Caco-2 (cell line): ENCODE measurements at regions of chr2 and their contacts with region 1.

Region 1: GRCh38 chr2:219560037-219560892 is 11.1 kb downstream of the OBSL1 start:
- DNase-seq: peak in 1 of 2 experiments; percentile 33
- H3K4me3 ChIP-seq: no peak overlapping the region
- H3K4me3 Mint-ChIP-seq: no peak overlapping the region
- H3K27ac Mint-ChIP-seq: peak overlapping the region; percentile 64
- H3K4me1 ChIP-seq: peaks cover 25% of the 10 kb centered on the region
- H3K4me1 Mint-ChIP-seq: peaks cover 15% of the 10 kb centered on the region
- H3K27me3 ChIP-seq: no peaks in the 10 kb centered on the region; the same call in 1 of the 2 replicates
- H3K27me3 Mint-ChIP-seq: no peaks in the 10 kb centered on the region
- CTCF ChIP-seq: peak; percentile 75 to 91

Region 2: DNA sequence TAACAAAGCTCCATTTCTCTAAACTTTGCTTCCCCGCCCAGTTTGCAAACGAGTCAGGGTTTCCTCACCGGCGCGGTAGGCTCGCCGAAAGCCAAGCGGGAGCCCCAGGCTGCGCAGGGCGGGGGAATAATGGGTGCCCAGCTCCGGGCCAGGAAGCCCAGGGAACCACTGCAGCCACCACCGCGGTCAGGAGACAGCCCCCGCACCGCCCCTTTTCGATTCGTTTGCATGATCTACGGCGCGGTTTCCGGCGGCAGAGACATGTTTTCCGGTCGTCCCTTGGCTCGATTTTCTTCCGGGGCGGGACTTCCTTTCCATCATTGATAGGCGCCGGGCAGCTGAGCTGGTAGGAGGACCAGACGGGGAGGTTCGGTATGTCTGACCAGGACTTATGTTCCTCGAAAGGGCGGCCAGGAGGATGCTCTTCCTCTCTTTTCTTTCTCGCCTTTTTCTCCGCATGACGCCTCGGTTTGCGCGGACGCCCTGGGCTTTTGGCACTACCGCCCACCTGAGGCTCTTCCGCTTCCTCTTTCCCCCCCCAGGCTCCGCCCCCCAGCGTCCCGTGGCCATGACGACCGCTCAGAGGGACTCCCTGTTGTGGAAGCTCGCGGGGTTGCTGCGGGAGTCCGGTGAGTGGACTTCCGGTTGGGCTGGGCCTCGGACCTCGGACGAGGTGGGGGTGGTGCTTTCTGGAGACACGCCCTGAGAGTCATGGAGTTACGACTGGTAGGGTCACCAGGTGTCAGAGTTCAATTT is 37.5 kb after region 1 on chr2 and contains the start of gene STK11IP:
- CTCF ChIA-PET with region 1: interaction called, 5 read pairs
- POLR2A ChIA-PET with region 1: interaction called, 13 read pairs
- intact Hi-C with region 1: loop called (anchors 5 kb)
- DNase-seq: peak; percentile 97 to 99
- H3K4me3 ChIP-seq: peak within 1 kb of the TSS; percentile 72
- H3K4me3 Mint-ChIP-seq: peak within 1 kb of the TSS; percentile 96
- H3K27ac Mint-ChIP-seq: peak within 1 kb of the TSS; percentile 98
- H3K4me1 ChIP-seq: peaks cover 23% of the 10 kb centered on the region
- H3K4me1 Mint-ChIP-seq: no peaks in the 10 kb centered on the region
- H3K27me3 ChIP-seq: no peaks in the 10 kb centered on the region
- H3K27me3 Mint-ChIP-seq: no peaks in the 10 kb centered on the region
- CTCF ChIP-seq: no peak
- total RNA-seq, gene STK11IP: 21.7 and 24.3 TPM in 2 replicates